H1 (cell line): ENCODE measurements at regions of chr3 and their contacts with region 1.

Region 1: DNA sequence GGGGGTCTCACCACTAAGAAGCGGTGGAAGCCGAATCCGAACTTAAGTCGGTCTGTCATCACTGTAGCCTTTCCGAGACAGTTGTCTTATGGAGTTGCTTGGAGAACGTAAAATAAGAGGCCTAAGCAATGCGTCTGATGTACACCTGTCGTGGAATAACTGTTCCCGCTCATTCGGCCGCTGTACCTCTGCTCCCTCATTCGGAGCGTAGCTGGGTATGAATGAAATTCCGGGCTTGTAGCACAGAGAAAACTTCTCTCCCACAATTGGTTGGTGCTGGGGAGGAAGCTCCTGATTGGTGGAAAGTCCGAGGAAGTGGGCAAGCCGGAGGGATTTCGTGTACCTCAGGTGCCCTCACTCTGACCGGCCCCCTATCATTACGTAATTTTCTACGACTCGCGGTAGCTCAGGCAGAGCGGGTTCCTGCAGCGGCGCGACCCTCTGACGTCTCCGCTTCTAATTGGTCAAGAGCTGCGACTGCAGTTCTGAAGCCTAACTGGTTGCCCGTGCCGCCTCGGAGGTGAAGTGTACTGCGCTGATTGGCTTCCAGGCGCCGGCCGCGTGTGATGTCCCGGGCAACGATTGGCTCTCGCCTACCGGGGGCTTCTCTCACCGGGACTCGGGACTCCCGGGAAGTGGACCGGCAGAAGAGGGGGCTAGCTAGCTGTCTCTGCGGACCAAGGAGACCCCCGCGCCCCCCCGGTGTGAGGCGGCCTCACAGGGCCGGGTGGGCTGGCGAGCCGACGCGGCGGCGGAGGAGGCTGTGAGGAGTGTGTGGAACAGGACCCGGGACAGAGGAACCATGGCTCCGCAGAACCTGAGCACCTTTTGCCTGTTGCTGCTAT is at the start of gene DNAJB11:
- DNase-seq: peak; percentile 98 to 99
- H3K4me3 ChIP-seq: peak within 1 kb of the TSS; percentile 83 to 97 (median 89)
- H3K27ac ChIP-seq: peak within 1 kb of the TSS; percentile 93
- H3K4me1 ChIP-seq: peaks cover 0 to 11% (median 4%) of the 10 kb centered on the region in 4 experiments; a peak in 6 of 7 replicates
- H3K27me3 ChIP-seq: no peaks in the 10 kb centered on the region
- CTCF ChIP-seq: no peak
- EP300 ChIP-seq: no peak
- POLR2A ChIP-seq: peak; percentile 75 to 98
- RAD21 ChIP-seq: no peak
- total RNA-seq, gene DNAJB11: 63.9 and 67.7 TPM in 2 replicates

Region 2: DNA sequence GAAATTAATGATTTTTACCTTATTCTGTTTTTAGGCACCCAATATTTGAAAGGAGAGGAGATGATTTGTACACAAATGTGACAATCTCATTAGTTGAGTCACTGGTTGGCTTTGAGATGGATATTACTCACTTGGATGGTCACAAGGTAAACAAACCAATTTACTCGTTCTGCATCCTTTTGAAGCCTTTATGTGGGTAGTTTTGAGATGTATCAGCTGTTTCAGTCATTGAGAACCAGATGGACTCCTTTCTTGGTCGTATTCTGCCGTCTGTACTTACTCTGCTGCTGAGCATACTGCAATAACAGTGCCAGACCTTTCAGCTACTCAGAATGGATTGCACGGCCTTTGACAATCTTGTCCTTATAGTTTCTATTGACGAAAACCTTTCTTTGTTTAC is 13.5 kb after region 1 on chr3:
- CTCF ChIA-PET with region 1: interaction called, 4 read pairs
- POLR2A ChIA-PET with region 1: interaction called, 10 read pairs
- DNase-seq: no peak
- H3K4me3 ChIP-seq: no peak overlapping the region
- H3K27ac ChIP-seq: no peak overlapping the region
- H3K4me1 ChIP-seq: no peaks in the 10 kb centered on the region
- H3K27me3 ChIP-seq: no peaks in the 10 kb centered on the region
- CTCF ChIP-seq: no peak
- EP300 ChIP-seq: no peak
- POLR2A ChIP-seq: no peak
- RAD21 ChIP-seq: no peak

Region 3: GRCh38 chr3:186772701-186773424 is 202.5 kb after region 1 on chr3:
- CTCF ChIA-PET with region 1: no interaction called
- POLR2A ChIA-PET with region 1: no interaction called
- DNase-seq: no peak
- H3K4me3 ChIP-seq: no peak overlapping the region; a peak in 1 of 8 replicates
- H3K27ac ChIP-seq: no peak overlapping the region
- H3K4me1 ChIP-seq: peaks cover 0 to 19% (median 5%) of the 10 kb centered on the region in 4 experiments; a peak in 6 of 7 replicates
- H3K27me3 ChIP-seq: peaks cover 0 to 3% (median 0%) of the 10 kb centered on the region in 4 experiments; a peak in 2 of 7 replicates
- CTCF ChIP-seq: no peak
- EP300 ChIP-seq: no peak
- POLR2A ChIP-seq: no peak
- RAD21 ChIP-seq: no peak